SK-N-SH (cell line): ENCODE measurements at regions of chr16 and their contacts with region 1.

Region 1: DNA sequence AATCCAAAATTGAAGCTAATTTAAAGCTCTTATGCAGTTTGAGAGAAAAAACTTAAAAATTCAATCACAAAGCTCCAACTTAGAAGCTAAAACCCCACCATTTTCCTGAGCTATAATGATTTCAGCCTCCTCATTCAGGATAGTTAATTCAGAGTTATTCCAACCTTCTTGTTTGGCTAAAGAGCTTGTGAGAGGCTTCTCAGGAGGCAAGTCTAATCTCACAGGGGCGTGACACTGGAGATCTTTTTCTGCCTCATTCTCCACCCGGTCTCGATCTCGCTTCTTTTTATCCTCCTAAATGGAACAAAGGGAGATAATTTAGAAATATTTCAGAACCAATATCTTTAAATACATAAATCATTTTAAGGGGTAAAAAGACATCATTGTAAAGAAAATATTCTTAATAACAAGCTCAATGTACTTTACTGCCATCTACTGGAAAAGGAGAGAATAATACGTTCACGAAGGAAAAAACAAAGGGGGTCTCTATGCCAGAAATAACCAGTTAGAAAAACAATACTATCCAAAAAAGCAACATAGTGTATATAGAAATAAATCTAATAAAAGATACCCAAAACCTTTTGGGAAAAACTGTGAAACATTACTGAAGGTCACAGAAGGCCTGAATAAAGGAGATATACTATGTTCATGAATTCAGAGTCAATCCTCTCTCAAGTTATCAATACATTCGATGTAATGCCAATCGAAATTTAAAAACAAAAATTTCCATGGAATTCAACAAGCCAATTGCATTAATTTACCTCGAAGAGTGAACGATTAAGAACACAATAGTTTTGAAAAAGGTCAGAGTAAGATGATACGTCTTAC is 13.9 kb downstream of the BRD7 start:
- DNase-seq: peak; percentile 58
- H3K4me3 ChIP-seq: no peak overlapping the region
- H3K27ac ChIP-seq: no peak overlapping the region
- H3K4me1 ChIP-seq: no peaks in the 10 kb centered on the region; a peak in 1 of 4 replicates
- H3K27me3 ChIP-seq: no peaks in the 10 kb centered on the region
- CTCF ChIP-seq: peak; percentile 84
- EP300 ChIP-seq: no peak
- RAD21 ChIP-seq: peak; percentile 60

Region 2: GRCh38 chr16:50065624-50066481 is 289.0 kb before region 1 on chr16 and contains the start of gene HEATR3:
- CTCF ChIA-PET with region 1: interaction called, 10 read pairs
- POLR2A ChIA-PET with region 1: no interaction called
- DNase-seq: peak; percentile 97
- H3K4me3 ChIP-seq: peak within 1 kb of the TSS; percentile 76 to 93
- H3K27ac ChIP-seq: peak within 1 kb of the TSS; percentile 89 to 95
- H3K4me1 ChIP-seq: peaks cover 12 to 17% of the 10 kb centered on the region in 2 experiments; a peak in 3 of 4 replicates
- H3K27me3 ChIP-seq: no peaks in the 10 kb centered on the region
- CTCF ChIP-seq: no peak
- EP300 ChIP-seq: no peak
- RAD21 ChIP-seq: no peak
- polyA plus RNA-seq, gene HEATR3: 10.1 and 12.9 TPM in 2 replicates

Region 3: DNA sequence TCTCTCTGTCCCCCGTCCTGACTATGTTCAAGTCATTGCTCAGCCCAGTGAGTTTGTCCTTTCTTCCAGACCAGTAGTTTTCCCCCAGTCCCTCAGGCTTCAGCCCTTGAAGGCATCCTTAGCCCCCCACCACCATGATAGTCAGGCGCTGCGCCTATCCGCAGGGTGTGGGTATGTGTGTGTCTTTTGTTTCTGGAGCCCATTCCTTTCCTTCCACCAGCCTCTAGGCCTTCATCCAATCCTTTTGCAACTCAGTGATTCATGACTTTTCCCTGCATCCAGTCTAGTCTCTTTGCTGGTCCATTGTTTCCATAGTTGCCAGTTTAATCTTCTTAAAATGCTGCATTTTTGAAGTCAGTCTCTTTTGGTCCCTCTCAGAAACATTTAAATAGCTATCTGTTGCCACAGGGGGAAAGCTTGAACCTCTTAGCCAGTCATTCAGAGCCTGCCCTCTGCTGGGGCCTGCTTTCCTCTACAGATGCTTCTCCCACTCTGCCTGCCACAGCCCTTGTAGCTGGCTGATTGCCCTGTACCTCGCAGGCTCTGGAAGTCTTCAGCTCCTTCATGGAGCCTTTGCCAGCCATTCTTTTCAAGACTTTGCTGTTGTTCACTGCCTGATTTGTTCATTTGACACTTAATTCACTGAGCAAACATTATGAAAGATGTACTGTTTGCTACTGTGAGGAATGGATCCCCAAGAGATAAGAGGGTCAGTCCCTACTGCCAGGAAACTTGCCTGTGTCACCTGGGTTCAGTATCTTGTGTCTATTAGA is 144.4 kb before region 1 on chr16:
- CTCF ChIA-PET with region 1: interaction called, 162 read pairs
- POLR2A ChIA-PET with region 1: no interaction called
- DNase-seq: peak; percentile 68
- H3K4me3 ChIP-seq: no peak overlapping the region; a peak in 1 of 4 replicates
- H3K27ac ChIP-seq: peak overlapping the region; percentile 47 to 71
- H3K4me1 ChIP-seq: peaks cover 29 to 35% of the 10 kb centered on the region in 2 experiments
- H3K27me3 ChIP-seq: no peaks in the 10 kb centered on the region
- CTCF ChIP-seq: peak; percentile 83
- EP300 ChIP-seq: no peak
- RAD21 ChIP-seq: peak; percentile 87

Region 4: DNA sequence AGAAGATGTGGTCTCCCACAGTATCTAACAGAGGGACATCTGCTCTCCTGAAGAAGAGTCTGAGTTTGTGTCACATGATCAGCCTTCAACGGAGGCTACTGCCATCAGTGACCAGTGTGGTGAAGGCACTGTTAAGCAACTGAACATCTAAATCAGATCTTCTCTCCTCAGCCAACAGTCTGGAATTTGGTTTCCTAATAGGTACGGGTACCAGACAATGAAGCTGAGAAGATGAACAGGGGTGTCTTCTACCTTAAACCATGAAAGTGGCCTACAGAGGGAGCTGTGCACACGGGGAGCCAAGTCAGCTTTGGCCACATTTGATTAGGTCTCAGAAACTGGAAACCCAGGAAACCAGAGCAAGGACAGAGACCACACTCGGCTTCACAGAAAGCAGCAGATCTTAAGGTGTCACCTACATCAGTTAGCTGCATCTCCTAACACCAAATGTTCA is 27.9 kb before region 1 on chr16:
- CTCF ChIA-PET with region 1: interaction called, 34 read pairs
- POLR2A ChIA-PET with region 1: no interaction called
- DNase-seq: no peak
- H3K4me3 ChIP-seq: no peak overlapping the region; a peak in 1 of 4 replicates
- H3K27ac ChIP-seq: no peak overlapping the region; a peak in 1 of 4 replicates
- H3K4me1 ChIP-seq: peaks cover 0 to 3% of the 10 kb centered on the region in 2 experiments; a peak in 2 of 4 replicates
- H3K27me3 ChIP-seq: no peaks in the 10 kb centered on the region
- CTCF ChIP-seq: peak; percentile 50
- EP300 ChIP-seq: no peak
- RAD21 ChIP-seq: no peak; the same call in 1 of the 2 replicates

Region 5: DNA sequence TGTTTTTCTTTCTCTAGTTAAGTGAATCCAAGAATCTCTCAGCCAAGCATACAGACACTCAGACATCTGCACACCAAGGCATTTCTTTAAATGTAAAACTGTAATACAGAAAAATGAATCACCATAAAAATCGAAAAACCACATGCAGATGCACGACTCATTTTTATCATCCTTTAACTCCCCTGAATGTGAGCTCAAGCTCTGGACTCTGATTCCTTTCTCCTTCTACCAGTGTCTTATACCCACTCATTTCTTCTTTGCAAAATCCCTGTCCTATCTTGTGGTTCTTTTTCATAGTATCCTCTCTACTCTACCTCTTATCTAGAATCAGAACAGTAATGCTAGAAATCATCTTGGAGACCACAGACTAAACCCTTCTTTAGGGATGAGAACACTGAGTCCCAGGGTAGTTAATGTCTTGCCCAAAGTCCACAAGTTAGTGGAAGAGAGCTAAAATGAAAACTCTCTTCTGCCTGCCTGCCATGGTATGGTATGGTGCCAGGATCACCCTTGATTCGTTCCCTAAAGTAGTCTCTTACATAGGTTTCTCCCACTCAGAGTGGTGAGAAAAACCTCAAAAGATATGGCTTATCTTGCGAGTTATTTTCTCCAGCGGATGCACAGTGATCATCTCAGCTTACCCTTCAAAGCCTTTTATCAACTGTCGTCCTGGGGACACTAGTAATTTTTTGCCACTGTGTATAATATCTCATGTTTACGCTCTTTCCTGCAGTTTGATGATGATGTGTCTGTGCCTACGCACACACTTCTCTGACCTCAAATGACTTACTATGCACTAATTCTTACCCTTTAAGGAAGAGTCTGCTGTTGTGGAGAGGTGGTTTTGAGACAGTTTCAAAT is 16.2 kb before region 1 on chr16:
- CTCF ChIA-PET with region 1: interaction called, 28 read pairs
- POLR2A ChIA-PET with region 1: no interaction called
- DNase-seq: no peak
- H3K4me3 ChIP-seq: no peak overlapping the region
- H3K27ac ChIP-seq: peak overlapping the region in 1 of 2 experiments; percentile 25; a peak in 1 of 4 replicates
- H3K4me1 ChIP-seq: peaks cover 0 to 4% of the 10 kb centered on the region in 2 experiments; a peak in 1 of 4 replicates
- H3K27me3 ChIP-seq: no peaks in the 10 kb centered on the region
- CTCF ChIP-seq: no peak
- EP300 ChIP-seq: no peak
- RAD21 ChIP-seq: no peak

Region 6: GRCh38 chr16:50368410-50369132 is 13.7 kb after region 1 on chr16 and contains the start of gene BRD7:
- CTCF ChIA-PET with region 1: interaction called, 19 read pairs
- POLR2A ChIA-PET with region 1: interaction called, 3 read pairs
- DNase-seq: peak; percentile 97
- H3K4me3 ChIP-seq: peak within 1 kb of the TSS; percentile 79 to 91
- H3K27ac ChIP-seq: peak within 1 kb of the TSS; percentile 39 to 72; a peak in 3 of 4 replicates
- H3K4me1 ChIP-seq: peaks cover 0 to 28% of the 10 kb centered on the region in 2 experiments; a peak in 2 of 4 replicates
- H3K27me3 ChIP-seq: no peaks in the 10 kb centered on the region
- CTCF ChIP-seq: no peak
- EP300 ChIP-seq: no peak
- RAD21 ChIP-seq: no peak
- polyA plus RNA-seq, gene BRD7: 31.6 and 32.9 TPM in 2 replicates

Region 7: DNA sequence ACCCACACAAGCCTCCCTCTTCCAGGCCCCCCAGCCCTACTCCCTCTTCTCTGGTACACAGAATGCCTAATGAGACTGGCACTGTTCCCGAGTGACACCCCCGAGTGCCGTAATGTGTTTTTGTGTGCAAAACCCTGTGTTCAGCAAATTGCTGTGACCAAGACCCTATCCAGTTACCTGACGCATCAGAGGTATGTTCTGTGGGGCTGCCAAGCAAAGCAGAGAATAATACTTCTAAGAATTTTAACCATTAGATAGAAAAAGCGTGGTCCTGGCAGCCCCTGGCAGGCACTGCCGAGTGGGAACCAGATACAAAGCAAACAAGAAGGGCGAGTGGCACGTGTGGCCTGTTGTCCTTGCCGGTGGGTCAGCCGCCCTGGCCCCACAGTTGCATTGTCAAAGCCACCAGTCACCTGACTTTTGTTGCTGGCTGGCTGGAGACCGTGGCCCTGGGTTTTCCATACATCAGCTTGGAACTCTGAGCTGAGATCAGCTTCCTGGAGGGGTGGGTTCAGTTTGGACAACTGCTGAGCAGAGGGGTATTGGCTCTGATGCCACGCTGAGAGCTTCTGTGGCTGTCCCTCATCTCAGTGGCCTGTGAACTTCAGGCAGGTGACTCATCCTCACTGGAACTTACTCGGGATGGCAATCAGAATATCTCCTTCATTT is 83.1 kb after region 1 on chr16:
- CTCF ChIA-PET with region 1: no interaction called
- POLR2A ChIA-PET with region 1: no interaction called
- DNase-seq: no peak
- H3K4me3 ChIP-seq: no peak overlapping the region
- H3K27ac ChIP-seq: no peak overlapping the region
- H3K4me1 ChIP-seq: peaks cover 0 to 8% of the 10 kb centered on the region in 2 experiments; a peak in 1 of 4 replicates
- H3K27me3 ChIP-seq: no peaks in the 10 kb centered on the region; the same call in 1 of the 2 replicates
- CTCF ChIP-seq: no peak
- EP300 ChIP-seq: no peak
- RAD21 ChIP-seq: no peak

Region 8: DNA sequence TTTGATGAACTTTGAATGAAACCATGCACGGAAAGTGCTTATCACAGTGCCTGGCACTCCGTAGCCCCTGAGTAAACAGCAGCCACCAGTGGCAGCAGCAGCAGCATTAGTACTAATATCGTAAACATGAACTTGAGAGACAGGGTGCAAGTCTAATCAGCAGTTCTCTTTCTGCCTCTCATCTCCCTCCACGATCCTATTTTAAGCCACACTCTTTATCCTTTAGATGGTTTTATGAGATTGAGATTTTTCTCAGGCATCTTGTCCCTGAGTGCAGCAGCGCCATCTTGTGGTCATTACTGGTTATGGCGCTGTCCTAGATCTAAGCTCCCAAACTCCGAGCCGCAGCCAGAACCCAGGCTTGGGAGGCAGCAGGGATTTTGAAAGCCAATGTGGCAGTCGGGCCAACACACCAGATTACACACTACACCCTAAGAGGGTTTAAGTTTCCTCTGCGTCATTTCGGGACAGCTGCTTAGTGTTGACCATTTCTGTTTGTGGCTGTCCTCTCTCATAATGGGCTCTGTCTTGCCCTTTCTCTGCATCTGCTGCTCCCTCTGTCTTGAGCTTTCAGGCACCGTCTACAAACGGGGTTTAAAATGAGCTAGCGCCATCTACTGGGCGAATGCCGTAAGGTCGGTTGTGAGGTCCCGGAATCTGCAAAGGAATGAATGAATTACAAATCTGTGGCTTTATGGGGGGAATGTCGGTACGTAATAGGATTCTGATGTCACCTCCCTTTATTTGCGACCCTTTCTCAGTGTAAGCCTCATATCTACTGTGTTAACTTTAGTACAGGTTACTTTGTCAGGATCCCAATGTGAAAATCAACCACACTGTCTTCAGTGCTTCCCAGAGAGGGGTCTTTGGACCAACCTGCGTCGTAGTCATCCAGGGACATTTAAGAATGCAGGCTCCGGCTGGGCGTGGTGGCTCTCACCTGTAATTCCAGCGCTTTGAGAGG is 451.5 kb after region 1 on chr16:
- CTCF ChIA-PET with region 1: interaction called, 18 read pairs
- POLR2A ChIA-PET with region 1: no interaction called
- DNase-seq: peak; percentile 76
- H3K4me3 ChIP-seq: peak overlapping the region; percentile 42 to 61
- H3K27ac ChIP-seq: no peak overlapping the region; a peak in 1 of 4 replicates
- H3K4me1 ChIP-seq: peaks cover 0 to 3% of the 10 kb centered on the region in 2 experiments; a peak in 1 of 4 replicates
- H3K27me3 ChIP-seq: no peaks in the 10 kb centered on the region
- CTCF ChIP-seq: peak; percentile 96
- EP300 ChIP-seq: no peak
- RAD21 ChIP-seq: peak; percentile 77